Activated B cell treated with CpG ODN at 0.5 μM for 24 hours (primary cell): ENCODE measurements at regions of chr6 and their contacts with region 1.

Region 1: GRCh38 chr6:26175428-26176181 is 88.4 kb downstream of the HFE start:
- DNase-seq: no peak
- ATAC-seq: no peak
- H3K4me3 Mint-ChIP-seq: no peak overlapping the region
- H3K27ac Mint-ChIP-seq: peak overlapping the region; percentile 65
- H3K4me1 Mint-ChIP-seq: peaks cover 38% of the 10 kb centered on the region
- H3K27me3 Mint-ChIP-seq: no peaks in the 10 kb centered on the region
- CTCF ChIP-seq: no peak

Region 2: GRCh38 chr6:25793970-25794369 is 381.6 kb before region 1 on chr6:
- CTCF ChIA-PET with region 1: no interaction called
- POLR2A ChIA-PET with region 1: no interaction called
- intact Hi-C with region 1: no loop called
- DNase-seq: no peak
- ATAC-seq: no peak
- H3K4me3 Mint-ChIP-seq: no peak overlapping the region
- H3K27ac Mint-ChIP-seq: no peak overlapping the region
- H3K4me1 Mint-ChIP-seq: no peaks in the 10 kb centered on the region
- H3K27me3 Mint-ChIP-seq: peaks cover 5% of the 10 kb centered on the region
- CTCF ChIP-seq: no peak

Region 3: DNA sequence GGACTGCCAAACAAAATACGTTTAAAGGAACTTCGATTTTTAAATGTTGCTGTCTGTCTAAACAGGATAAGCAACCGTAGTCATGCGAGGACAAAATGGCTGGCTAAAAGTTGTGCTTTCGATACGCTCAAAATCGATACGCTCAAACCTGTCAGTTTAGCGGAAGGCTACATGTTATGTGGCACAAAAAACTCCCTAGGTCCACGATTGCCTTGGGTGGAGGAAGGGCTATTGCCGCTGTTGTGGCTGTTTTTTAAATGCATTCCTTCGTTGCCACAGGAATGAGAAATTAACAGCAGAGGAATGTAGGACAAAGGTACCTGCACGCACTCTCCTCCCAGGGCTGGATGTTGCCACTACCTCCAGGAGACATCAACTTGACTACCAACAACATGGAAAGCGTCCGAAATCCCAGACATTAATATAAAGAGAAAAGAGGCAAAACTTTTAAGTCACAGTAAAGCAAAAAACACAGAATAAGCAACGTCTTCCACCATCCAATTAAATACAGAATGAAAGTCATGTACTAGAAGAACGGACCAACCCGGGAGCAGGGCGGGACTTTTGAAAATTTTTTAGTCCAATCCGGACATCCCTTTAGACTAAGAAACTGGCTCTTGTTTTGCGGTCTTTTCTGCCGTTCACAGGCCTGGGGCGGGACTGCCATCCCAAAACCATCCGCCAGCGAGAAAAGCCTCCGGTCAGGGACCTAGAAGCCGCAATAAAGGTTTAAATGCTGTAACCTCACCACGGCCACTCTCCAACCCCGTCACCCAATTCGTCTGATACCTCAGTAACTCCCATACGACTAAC is 120.5 kb before region 1 on chr6:
- CTCF ChIA-PET with region 1: no interaction called
- POLR2A ChIA-PET with region 1: interaction called, 11 read pairs
- intact Hi-C with region 1: no loop called
- DNase-seq: peak; percentile 63
- ATAC-seq: peak; percentile 65
- H3K4me3 Mint-ChIP-seq: peak overlapping the region; percentile 97
- H3K27ac Mint-ChIP-seq: peak overlapping the region; percentile 100
- H3K4me1 Mint-ChIP-seq: peaks cover 20% of the 10 kb centered on the region
- H3K27me3 Mint-ChIP-seq: no peaks in the 10 kb centered on the region
- CTCF ChIP-seq: no peak

Region 4: DNA sequence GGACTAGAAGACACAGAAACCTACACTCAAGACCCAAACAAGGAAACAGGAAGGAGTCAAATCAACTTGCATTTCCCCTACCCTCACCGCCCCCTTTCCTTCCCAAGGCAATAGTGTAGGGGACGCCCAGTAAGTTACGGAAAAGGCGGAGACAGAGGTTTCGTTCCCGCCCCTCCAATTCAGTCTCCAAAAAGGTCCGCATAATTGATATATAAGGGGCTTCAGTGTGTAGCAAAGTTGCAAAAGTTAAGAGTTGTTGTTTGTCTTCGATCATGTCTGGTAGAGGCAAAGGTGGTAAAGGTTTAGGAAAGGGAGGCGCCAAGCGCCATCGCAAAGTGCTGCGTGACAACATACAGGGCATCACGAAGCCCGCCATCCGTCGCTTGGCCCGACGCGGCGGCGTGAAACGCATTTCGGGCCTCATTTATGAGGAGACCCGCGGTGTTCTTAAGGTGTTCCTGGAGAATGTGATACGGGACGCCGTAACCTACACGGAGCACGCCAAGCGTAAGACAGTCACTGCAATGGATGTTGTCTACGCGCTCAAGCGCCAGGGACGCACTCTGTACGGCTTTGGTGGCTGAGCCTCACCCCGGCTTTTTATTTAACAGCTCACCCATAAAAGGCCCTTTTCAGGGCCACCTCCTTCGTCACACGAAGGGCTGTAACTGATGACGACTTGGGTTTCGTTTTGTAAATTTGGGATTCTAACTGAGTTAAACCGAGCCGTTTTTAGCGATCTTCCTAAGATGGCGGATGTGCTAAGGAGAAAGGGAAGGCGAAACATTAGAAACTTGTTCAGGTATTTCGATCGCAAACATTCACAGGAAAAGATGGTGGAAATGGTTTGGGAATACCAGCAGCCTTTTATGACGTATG is 64.8 kb after region 1 on chr6:
- CTCF ChIA-PET with region 1: no interaction called
- POLR2A ChIA-PET with region 1: interaction called, 37 read pairs
- intact Hi-C with region 1: loop called (anchors 2 kb)
- DNase-seq: peak; percentile 61
- ATAC-seq: peak; percentile 79
- H3K4me3 Mint-ChIP-seq: peak overlapping the region; percentile 82
- H3K27ac Mint-ChIP-seq: peak overlapping the region; percentile 92
- H3K4me1 Mint-ChIP-seq: peaks cover 26% of the 10 kb centered on the region
- H3K27me3 Mint-ChIP-seq: no peaks in the 10 kb centered on the region
- CTCF ChIP-seq: no peak

Region 5: DNA sequence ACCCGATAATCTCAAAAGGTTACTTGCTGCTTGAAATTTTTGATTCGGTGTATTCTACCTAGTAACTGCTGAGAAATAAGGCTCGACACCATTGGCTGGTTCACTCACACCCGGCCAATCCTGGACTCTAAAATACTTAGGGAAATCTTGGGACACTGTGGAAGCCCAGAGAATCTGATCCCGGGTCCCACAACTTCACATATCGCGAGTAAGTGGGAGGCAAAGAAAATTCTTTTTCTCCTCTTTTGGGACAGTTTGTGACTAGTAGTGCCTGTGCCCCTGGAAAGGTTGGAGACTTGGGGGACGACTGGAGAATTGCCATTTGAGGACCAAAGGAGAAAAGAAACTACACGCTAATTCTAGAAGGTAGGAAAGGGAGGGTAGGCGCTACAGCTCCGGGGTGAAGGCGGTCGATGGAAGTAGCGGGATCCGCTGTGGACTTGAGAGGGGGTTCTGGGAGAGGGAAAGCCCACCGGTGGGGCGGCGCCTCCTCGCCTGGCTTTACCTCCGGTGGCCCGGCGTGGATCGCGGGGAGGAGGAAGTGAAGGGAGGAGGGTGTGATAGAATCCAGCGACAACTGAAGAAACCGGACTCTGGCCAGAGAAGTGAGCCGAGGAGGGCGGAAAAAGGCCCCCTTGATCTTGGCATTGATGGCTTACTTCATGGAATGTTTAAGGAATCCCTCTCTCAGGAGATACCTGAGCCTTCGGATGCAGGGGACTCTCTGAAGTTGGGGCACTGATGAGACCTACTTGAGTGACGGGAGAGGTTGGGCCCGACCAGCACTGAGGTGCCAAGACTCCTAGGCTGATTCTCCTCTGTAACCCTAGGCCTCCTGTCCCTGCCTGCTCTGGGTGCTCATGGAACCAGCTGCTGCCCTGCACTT is 245.9 kb after region 1 on chr6:
- CTCF ChIA-PET with region 1: no interaction called
- POLR2A ChIA-PET with region 1: no interaction called
- intact Hi-C with region 1: loop called (anchors 5 kb)
- DNase-seq: peak; percentile 38
- ATAC-seq: peak; percentile 95
- H3K4me3 Mint-ChIP-seq: no peak overlapping the region
- H3K27ac Mint-ChIP-seq: peak overlapping the region; percentile 56
- H3K4me1 Mint-ChIP-seq: peaks cover 5% of the 10 kb centered on the region
- H3K27me3 Mint-ChIP-seq: no peaks in the 10 kb centered on the region
- CTCF ChIP-seq: no peak

Region 6: DNA sequence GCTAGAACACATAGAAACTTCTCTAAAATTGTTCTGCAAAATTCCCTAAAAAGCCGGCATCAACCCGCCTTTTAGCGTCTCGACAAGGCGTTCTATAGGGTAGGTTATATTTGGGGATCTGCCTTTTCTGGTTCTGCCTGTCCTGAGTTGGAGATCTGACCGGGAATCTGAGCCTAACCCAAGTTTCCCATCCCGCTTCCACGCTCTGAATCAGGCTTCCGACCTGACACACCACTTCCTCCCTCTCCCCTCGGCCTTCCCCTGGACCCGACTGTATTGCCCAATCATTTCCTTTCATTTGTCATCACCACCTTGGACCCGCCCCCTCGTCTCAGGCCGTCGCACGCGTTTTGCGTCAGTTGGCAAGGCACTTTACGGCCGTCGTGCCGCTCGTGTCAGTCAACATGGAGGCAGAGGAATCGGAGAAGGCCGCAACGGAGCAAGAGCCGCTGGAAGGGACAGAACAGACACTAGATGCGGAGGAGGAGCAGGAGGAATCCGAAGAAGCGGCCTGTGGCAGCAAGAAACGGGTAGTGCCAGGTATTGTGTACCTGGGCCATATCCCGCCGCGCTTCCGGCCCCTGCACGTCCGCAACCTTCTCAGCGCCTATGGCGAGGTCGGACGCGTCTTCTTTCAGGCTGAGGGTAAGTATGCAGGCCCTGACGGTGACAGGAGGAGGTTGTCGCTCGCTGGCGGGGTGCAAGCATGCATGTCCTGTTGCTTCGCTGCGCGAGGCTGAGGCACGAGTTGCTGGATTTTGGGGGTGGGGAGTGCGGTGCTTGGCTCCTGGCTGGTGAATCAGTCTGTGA is 421.2 kb after region 1 on chr6 and contains the start of gene ABT1:
- CTCF ChIA-PET with region 1: interaction called, 7 read pairs
- POLR2A ChIA-PET with region 1: interaction called, 5 read pairs
- intact Hi-C with region 1: loop called (anchors 1 kb)
- DNase-seq: peak; percentile 91
- ATAC-seq: peak; percentile 90
- H3K4me3 Mint-ChIP-seq: no peak within 1 kb of the TSS
- H3K27ac Mint-ChIP-seq: no peak within 1 kb of the TSS
- H3K4me1 Mint-ChIP-seq: peaks cover 17% of the 10 kb centered on the region
- H3K27me3 Mint-ChIP-seq: peaks cover 5% of the 10 kb centered on the region
- CTCF ChIP-seq: no peak
- total RNA-seq, gene ABT1: 30.7 and 30.8 TPM in 2 replicates